ENCODE measurements at regions of chr11 and their contacts with region 1.

Region 1: DNA sequence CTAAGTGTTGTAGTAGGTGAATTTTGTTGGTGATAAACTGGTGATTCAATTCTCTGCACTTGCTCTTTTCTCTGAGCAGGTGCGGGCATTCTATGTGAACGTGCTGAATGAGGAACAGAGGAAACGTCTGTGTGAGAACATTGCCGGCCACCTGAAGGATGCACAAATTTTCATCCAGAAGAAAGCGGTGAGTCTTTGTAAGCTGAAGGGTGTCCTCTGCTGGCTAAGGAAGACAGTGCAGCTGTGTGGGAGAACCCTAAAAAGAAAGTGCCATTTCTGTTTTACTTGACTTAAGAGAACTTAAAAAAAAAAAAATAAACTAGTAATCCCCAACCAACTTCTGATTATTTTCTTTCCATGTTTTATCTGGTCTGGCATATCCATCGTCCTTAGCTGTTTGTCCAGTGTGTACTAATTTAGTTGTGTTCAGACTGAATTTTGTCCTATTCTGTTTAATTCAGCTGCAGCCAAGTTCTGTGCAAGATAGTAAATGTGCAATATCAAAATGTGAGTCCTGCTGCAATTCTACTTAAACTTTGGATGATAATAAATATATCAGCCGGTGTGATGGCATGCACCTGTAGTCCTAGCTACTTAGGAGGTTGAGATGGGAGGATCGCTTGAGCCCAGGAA is 29.6 kb downstream of the CAT start:
- DNase-seq: peak; percentile 22
- H3K4me3 Mint-ChIP-seq: no peak overlapping the region
- H3K27ac Mint-ChIP-seq: no peak overlapping the region
- H3K4me1 Mint-ChIP-seq: peaks cover 6% of the 10 kb centered on the region
- H3K27me3 Mint-ChIP-seq: no peaks in the 10 kb centered on the region

Region 2: GRCh38 chr11:34366522-34366921 is 101.8 kb before region 1 on chr11:
- intact Hi-C with region 1: loop called (anchors 1 kb)
- DNase-seq: no peak
- H3K4me3 Mint-ChIP-seq: no peak overlapping the region
- H3K27ac Mint-ChIP-seq: no peak overlapping the region
- H3K4me1 Mint-ChIP-seq: peaks cover 20% of the 10 kb centered on the region
- H3K27me3 Mint-ChIP-seq: peaks cover 7% of the 10 kb centered on the region

Region 3: GRCh38 chr11:34417202-34417601 is 51.1 kb before region 1 on chr11:
- intact Hi-C with region 1: loop called (anchors 5 kb)
- DNase-seq: no peak
- H3K4me3 Mint-ChIP-seq: no peak overlapping the region
- H3K27ac Mint-ChIP-seq: no peak overlapping the region
- H3K4me1 Mint-ChIP-seq: no peaks in the 10 kb centered on the region
- H3K27me3 Mint-ChIP-seq: peaks cover 14% of the 10 kb centered on the region

Region 4: GRCh38 chr11:34512840-34513681 is 44.7 kb after region 1 on chr11:
- intact Hi-C with region 1: no loop called
- DNase-seq: peak; percentile 16
- H3K4me3 Mint-ChIP-seq: no peak overlapping the region
- H3K27ac Mint-ChIP-seq: no peak overlapping the region
- H3K4me1 Mint-ChIP-seq: no peaks in the 10 kb centered on the region
- H3K27me3 Mint-ChIP-seq: peaks cover 3% of the 10 kb centered on the region

Measured in activated T-helper 1 cell treated with anti-CD3 and anti-CD28 coated beads, Interleukin-12 subunit alpha, Interleukin-12 subunit beta, Interleukin-2, Interleukin-4 antibody, amounts not matched to agents 30 ng/mL and 10 ng/mL and 1 ng/mL, durations not matched to agents 14 hours and 24 hours and 36 hours (primary cell).